Heart right ventricle (tissue), 16 donors: ENCODE measurements at regions of chr9 and their contacts with region 1.

Region 1: DNA sequence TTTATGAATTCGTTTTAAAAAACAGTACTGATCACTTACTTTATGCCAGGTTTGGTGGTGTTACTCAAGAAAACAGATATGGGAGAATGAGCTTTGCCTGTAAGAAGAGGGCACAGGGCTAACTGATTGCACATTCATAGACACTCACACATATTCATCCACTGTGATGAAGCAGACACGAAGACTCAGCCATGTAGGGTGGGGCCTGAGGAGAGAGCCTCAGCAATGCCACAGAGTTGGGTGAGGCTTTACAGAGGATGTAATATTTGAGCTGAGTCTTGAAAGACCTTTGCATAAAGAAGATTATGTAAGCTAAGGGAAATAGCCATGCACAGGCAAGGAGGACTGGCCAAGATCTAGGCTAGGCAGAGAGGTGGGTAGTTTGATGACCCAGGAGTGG is 472.8 kb downstream of the PSAT1 start:
- DNase-seq: no peak
- ATAC-seq: no peak
- H3K4me3 ChIP-seq: no peak overlapping the region
- H3K27ac ChIP-seq: no peak overlapping the region
- H3K4me1 ChIP-seq: no peaks in the 10 kb centered on the region
- H3K27me3 ChIP-seq: no peaks in the 10 kb centered on the region
- CTCF ChIP-seq: no peak

Region 2: GRCh38 chr9:78654324-78654723 is 115.4 kb before region 1 on chr9:
- intact Hi-C with region 1: no loop called
- DNase-seq: no peak
- ATAC-seq: no peak
- H3K4me3 ChIP-seq: no peak overlapping the region
- H3K27ac ChIP-seq: no peak overlapping the region
- H3K4me1 ChIP-seq: no peaks in the 10 kb centered on the region
- H3K27me3 ChIP-seq: no peaks in the 10 kb centered on the region
- CTCF ChIP-seq: no peak

Region 3: DNA sequence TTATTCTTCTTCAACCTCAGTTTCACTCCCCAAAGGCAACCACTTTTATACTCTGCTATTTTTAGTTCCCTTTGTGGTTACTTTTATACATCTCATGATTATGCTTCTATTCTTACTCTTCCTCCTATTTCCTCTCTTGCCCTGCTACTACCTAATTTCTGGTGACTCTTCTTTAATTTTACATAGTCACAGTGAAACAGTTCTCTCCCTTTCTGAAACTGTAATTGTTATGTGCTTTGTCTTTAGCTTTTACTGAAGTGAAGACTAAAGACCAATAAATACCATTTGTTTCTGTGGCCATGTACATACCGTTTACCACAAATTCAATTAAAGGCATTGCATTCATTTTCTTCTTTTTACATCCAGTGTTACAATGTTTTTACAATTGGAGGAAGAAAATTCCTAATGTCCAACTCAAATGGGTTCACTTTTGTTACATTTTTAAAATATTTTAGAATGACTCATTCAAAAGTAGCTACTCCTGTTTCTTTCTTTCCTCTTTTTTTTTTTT is 62.2 kb before region 1 on chr9:
- intact Hi-C with region 1: loop called in 1 of 10 experiments (anchors 10 kb)
- DNase-seq: no peak
- ATAC-seq: no peak
- H3K4me3 ChIP-seq: no peak overlapping the region
- H3K27ac ChIP-seq: no peak overlapping the region
- H3K4me1 ChIP-seq: peaks cover 0 to 7% (median 0%) of the 10 kb centered on the region in 9 donors
- H3K27me3 ChIP-seq: no peaks in the 10 kb centered on the region
- CTCF ChIP-seq: no peak

Region 4: DNA sequence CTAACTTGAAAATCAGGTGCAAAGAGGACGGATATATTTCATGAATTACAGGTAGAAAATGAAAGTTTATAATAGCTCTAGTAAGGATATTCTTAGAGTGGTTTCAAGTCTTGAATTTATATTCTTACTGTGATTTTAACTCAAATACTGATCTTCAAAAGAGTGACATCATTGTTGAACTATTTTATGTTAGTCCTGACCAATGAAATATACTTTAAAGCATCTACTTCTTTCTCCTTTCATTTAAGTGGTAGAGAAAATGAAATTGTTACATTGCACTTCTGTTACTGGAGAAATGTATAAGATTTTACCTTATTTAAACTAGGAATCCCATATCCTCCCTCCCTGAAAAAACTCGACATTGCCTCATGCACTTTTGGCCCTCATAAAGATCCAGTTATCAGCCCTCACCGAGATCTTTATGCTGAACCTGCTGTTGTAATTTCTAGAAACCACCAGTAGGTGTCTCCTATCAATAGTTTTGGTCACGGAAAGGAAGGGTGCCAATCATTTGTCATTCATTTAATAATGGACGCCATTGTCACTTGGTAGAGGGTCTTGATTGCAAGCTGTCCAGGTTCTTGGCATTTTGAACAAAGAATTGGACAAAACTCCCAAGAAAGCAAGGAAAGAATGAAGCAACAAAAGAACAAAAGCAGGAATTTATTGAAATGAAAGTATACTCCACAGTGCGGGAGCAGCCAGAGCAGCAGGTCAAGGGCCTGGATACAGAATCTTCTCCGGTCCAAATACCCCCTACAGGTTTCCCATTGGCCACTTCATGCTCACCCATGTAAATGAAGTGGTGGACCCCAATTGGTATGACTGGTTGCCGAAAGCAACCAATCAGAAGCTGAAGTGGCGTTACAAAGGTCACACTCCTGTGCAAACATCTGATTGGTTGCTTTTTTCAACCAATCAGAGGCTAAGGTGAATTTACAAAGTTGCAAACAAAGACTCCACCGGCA is 51.4 kb after region 1 on chr9:
- intact Hi-C with region 1: loop called in 1 of 10 experiments (anchors 5 kb)
- DNase-seq: no peak
- ATAC-seq: no peak
- H3K4me3 ChIP-seq: peak overlapping the region in 4 of 10 donors; percentile 9 to 26 (median 22)
- H3K27ac ChIP-seq: no peak overlapping the region
- H3K4me1 ChIP-seq: no peaks in the 10 kb centered on the region
- H3K27me3 ChIP-seq: no peaks in the 10 kb centered on the region
- CTCF ChIP-seq: peak in 8 of 9 donors; percentile 29 to 69 (median 60)